ENCODE measurements at regions of chr2 and their contacts with region 1.

Region 1: DNA sequence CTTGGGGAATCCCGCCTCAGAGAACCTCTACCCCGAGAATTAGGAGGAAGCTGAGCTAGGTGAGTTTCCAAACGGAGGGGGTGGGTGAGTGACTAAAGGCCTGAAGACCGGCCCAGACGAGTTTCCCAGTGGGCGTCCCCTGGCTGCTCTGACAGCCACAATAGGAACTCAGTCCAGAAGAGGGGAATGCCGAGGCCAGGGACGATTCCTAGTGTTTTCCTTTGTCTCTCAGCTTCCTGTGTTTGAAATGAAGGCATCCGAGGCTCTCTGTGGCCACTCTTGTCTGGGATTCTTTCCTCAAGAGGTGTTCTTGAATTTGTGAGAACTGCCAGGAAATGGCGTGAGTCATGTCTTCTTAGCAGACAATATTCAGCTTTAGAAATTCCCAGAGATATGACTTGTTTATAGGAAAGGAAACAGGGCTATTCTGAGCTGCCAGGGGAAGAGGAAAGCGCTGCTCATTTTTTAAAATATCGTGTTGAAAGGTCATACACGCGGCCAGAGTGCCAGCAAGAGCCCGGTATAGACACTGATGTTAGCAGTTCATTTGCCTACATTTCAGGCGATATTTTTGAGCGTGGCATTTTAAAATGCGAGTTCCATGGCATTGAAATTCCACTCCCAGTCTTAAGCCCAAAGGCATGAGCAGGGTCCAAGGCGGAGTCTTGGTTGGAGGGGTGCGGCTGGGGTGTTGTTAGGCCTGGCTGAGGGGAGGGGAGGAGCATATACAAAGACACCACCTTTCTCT is 169.1 kb upstream of the KLF7 start:
- DNase-seq: peak; percentile 99
- H3K4me3 ChIP-seq: peak overlapping the region in 1 of 3 experiments; percentile 60
- H3K27ac ChIP-seq: peak overlapping the region; percentile 99
- H3K4me1 ChIP-seq: peaks cover 53% of the 10 kb centered on the region
- H3K27me3 ChIP-seq: no peaks in the 10 kb centered on the region
- CTCF ChIP-seq: no peak
- POLR2A ChIP-seq: peak; percentile 24

Region 2: GRCh38 chr2:206800506-206801417 is 534.0 kb before region 1 on chr2:
- CTCF ChIA-PET with region 1: interaction called, 4 read pairs
- POLR2A ChIA-PET with region 1: no interaction called
- dilution Hi-C with region 1: no loop called
- intact Hi-C with region 1: loop called (anchors 2 kb)
- DNase-seq: peak; percentile 82
- H3K4me3 ChIP-seq: no peak overlapping the region
- H3K27ac ChIP-seq: no peak overlapping the region
- H3K4me1 ChIP-seq: peaks cover 14% of the 10 kb centered on the region
- H3K27me3 ChIP-seq: no peaks in the 10 kb centered on the region
- CTCF ChIP-seq: peak; percentile 55 to 68
- POLR2A ChIP-seq: no peak

Region 3: DNA sequence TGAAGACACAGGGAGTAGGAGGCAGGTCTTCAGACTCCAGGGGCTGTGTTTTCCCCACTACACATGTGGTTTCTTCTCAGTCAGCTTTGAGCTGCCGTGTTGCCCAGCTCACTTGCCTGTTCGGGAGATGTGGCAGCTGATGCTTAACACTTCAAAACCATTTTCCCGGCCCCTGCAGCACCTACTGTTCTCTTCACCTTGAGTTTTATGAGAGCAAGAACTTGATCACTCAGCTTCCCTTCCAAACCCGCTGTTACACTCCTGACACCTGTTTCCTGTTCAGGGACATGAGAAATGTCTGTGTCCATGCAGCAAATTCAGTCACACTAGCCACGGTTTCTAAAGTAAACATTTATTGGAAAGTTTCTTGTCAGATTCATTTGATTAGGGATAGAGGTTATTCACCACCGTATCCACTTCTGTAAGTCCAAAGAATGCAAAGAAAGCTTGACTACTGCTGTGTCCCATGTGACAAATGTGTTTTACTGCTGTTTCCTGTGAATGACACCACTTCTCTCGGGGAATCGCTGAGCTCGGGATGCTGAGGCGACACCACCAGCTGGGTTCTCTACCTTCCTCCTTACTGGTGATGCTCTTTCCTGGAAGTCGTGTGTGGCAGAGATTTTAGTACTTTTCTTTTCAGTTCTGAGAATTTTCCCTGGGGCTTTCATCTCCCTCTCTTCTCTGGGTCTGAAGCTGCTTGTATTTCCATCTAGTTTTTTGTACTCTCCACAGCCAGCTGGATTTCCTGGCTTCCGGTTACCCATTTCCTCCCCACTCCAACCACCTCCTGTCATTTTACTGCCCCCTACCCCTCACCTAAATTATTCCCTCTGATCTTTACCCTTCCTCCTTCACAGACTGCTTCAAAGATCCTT is 260.8 kb before region 1 on chr2:
- CTCF ChIA-PET with region 1: no interaction called
- POLR2A ChIA-PET with region 1: no interaction called
- dilution Hi-C with region 1: no loop called
- intact Hi-C with region 1: loop called (anchors 5 kb)
- DNase-seq: peak; percentile 70
- H3K4me3 ChIP-seq: peak overlapping the region in 2 of 3 experiments; percentile 2 to 12
- H3K27ac ChIP-seq: peak overlapping the region; percentile 22
- H3K4me1 ChIP-seq: peaks cover 23% of the 10 kb centered on the region
- H3K27me3 ChIP-seq: no peaks in the 10 kb centered on the region
- CTCF ChIP-seq: no peak
- POLR2A ChIP-seq: peak; percentile 63

Region 4: GRCh38 chr2:207230261-207231105 is 104.3 kb before region 1 on chr2:
- CTCF ChIA-PET with region 1: interaction called, 4 read pairs
- POLR2A ChIA-PET with region 1: no interaction called
- dilution Hi-C with region 1: no loop called
- intact Hi-C with region 1: loop called (anchors 1 kb)
- DNase-seq: peak; percentile 38
- H3K4me3 ChIP-seq: no peak overlapping the region
- H3K27ac ChIP-seq: no peak overlapping the region
- H3K4me1 ChIP-seq: peaks cover 30% of the 10 kb centered on the region
- H3K27me3 ChIP-seq: no peaks in the 10 kb centered on the region
- CTCF ChIP-seq: peak; percentile 32 to 37
- POLR2A ChIP-seq: no peak

Region 5: GRCh38 chr2:207274530-207275189 is 60.1 kb before region 1 on chr2:
- CTCF ChIA-PET with region 1: no interaction called
- POLR2A ChIA-PET with region 1: no interaction called
- dilution Hi-C with region 1: no loop called
- intact Hi-C with region 1: loop called (anchors 1 kb)
- DNase-seq: peak; percentile 88
- H3K4me3 ChIP-seq: no peak overlapping the region
- H3K27ac ChIP-seq: peak overlapping the region; percentile 11
- H3K4me1 ChIP-seq: peaks cover 5% of the 10 kb centered on the region
- H3K27me3 ChIP-seq: no peaks in the 10 kb centered on the region
- CTCF ChIP-seq: no peak
- POLR2A ChIP-seq: no peak

Region 6: GRCh38 chr2:207394812-207395534 is 60.2 kb after region 1 on chr2:
- CTCF ChIA-PET with region 1: interaction called, 3 read pairs
- POLR2A ChIA-PET with region 1: no interaction called
- dilution Hi-C with region 1: no loop called
- intact Hi-C with region 1: loop called (anchors 1 kb)
- DNase-seq: peak; percentile 98
- H3K4me3 ChIP-seq: no peak overlapping the region
- H3K27ac ChIP-seq: peak overlapping the region; percentile 99
- H3K4me1 ChIP-seq: peaks cover 21% of the 10 kb centered on the region
- H3K27me3 ChIP-seq: no peaks in the 10 kb centered on the region
- CTCF ChIP-seq: no peak
- POLR2A ChIP-seq: peak; percentile 44

Measured in endothelial cell of umbilical vein (primary cell).